ENCODE measurements at regions of chr11 and their contacts with region 1.

Region 1: DNA sequence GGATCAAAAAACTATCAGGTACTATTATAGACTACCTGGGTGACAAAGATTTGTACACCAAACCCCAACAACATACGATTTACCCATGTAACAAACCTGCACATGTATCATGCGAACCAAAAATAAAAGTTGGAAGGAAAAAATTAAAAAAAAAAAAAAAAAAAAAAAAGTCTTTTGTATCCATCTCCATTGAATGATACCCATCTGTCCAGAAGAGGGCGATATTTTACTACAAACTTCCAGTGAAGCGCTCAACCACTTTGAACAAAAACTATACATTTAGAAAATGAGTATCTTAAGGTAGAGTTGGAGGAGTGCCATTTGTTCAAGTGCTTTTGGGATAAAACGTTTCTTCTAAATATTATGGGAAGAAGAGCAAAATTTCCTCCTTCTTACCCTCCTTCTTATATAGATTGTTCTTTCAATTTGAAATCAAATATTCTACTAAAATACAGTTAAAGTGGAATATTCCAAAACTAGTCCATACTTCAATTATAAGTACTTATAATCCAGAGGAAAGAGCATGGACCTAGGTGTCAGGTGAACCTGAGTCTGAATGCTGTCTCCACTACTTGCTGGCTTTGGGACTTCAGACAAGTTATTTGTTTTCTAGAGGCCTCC is 23.3 kb downstream of the ARL14EP start:
- DNase-seq: no peak
- H3K4me3 ChIP-seq: no peak overlapping the region
- H3K27ac ChIP-seq: no peak overlapping the region
- H3K4me1 ChIP-seq: peaks cover 0 to 42% (median 10%) of the 10 kb centered on the region in 6 donors
- H3K27me3 ChIP-seq: no peaks in the 10 kb centered on the region
- CTCF ChIP-seq: peak; percentile 19 to 76 (median 61)
- POLR2A ChIP-seq: no peak

Region 2: GRCh38 chr11:30586251-30587144 is 240.3 kb after region 1 on chr11 and contains the start of gene MPPED2:
- intact Hi-C with region 1: no loop called
- DNase-seq: peak; percentile 83
- H3K4me3 ChIP-seq: peak within 1 kb of the TSS; percentile 40 to 79 (median 56)
- H3K27ac ChIP-seq: peak within 1 kb of the TSS in 6 of 8 donors; percentile 43 to 75 (median 68)
- H3K4me1 ChIP-seq: peaks cover 0 to 34% (median 23%) of the 10 kb centered on the region in 6 donors
- H3K27me3 ChIP-seq: peaks cover 0 to 72% (median 43%) of the 10 kb centered on the region in 7 donors
- CTCF ChIP-seq: peak in 7 of 11 experiments; percentile 5 to 46 (median 35)
- POLR2A ChIP-seq: no peak
- total RNA-seq, gene MPPED2: 3.0 to 14.6 (median 7.9) TPM

Region 3: DNA sequence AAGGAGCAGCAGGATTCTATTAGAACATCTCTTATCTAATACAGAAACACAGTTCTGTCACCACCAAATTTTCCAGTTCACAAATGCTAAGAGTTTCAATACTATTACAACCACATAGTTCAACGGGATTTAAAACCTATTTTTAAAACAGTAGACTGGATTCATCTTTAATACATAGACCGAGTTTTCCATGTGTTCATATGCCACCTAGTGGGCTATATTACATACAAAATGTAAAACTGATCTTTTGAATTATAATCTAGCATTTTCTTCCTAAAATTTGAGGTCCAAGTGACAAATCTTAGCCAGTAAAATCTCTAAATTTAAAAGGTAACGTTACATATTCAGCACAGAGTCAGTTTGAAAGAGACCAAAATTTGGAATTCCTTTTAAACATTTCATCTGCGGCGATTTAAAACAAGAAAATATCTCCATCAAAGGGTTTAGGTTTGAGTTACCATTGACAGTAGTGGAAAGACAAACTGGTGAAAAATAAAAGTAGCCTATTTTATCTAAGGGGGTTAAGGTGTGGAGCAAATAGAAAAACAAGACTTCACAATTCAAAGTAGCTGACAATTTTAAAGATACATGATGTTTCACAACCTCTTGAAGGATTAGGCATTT is 509.3 kb after region 1 on chr11:
- intact Hi-C with region 1: loop called (anchors 10 kb)
- DNase-seq: no peak
- H3K4me3 ChIP-seq: no peak overlapping the region
- H3K27ac ChIP-seq: no peak overlapping the region
- H3K4me1 ChIP-seq: no peaks in the 10 kb centered on the region
- H3K27me3 ChIP-seq: no peaks in the 10 kb centered on the region
- CTCF ChIP-seq: peak in 4 of 11 experiments; percentile 15 to 36 (median 29)
- POLR2A ChIP-seq: no peak

Region 4: GRCh38 chr11:30917859-30918478 is 571.8 kb after region 1 on chr11:
- intact Hi-C with region 1: loop called (anchors 5 kb)
- DNase-seq: no peak
- H3K4me3 ChIP-seq: no peak overlapping the region
- H3K27ac ChIP-seq: no peak overlapping the region
- H3K4me1 ChIP-seq: no peaks in the 10 kb centered on the region
- H3K27me3 ChIP-seq: no peaks in the 10 kb centered on the region
- CTCF ChIP-seq: peak; percentile 16 to 71 (median 53)
- POLR2A ChIP-seq: no peak